Calu3 (cell line): ENCODE measurements at regions of chr2 and their contacts with region 1.

Region 1: GRCh38 chr2:55771612-55772011 is 78.0 kb upstream of the PNPT1 start:
- DNase-seq: no peak
- H3K4me3 Mint-ChIP-seq: peak overlapping the region; percentile 29
- H3K27ac Mint-ChIP-seq: peak overlapping the region; percentile 54
- H3K4me1 Mint-ChIP-seq: peaks cover 33% of the 10 kb centered on the region
- H3K27me3 Mint-ChIP-seq: no peaks in the 10 kb centered on the region
- CTCF ChIP-seq: peak; percentile 50

Region 2: GRCh38 chr2:55843096-55843993 is 71.7 kb after region 1 on chr2:
- CTCF ChIA-PET with region 1: no interaction called
- intact Hi-C with region 1: loop called (anchors 2 kb)
- DNase-seq: peak; percentile 38
- H3K4me3 Mint-ChIP-seq: no peak overlapping the region
- H3K27ac Mint-ChIP-seq: no peak overlapping the region
- H3K4me1 Mint-ChIP-seq: peaks cover 5% of the 10 kb centered on the region
- H3K27me3 Mint-ChIP-seq: no peaks in the 10 kb centered on the region
- CTCF ChIP-seq: no peak

Region 3: DNA sequence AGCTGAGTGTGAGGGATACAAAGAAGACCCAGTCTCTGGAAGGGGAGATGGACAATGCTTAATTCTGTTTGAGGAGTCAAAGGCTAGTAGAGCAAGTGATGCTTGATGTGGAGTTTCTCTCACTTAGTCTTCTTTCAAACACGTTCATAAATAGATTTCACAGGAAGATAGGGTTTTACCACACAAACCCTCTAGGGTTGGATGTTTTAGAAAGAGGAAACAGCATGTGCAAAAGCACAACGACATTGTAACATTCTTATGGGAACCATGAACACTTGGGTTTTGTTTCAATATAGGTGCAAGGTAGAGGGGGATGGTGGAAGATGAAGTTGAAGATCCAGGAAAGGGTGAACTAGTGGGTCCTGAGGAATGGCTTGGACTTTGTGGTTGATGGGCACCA is 162.7 kb after region 1 on chr2:
- CTCF ChIA-PET with region 1: no interaction called
- intact Hi-C with region 1: no loop called
- DNase-seq: no peak
- H3K4me3 Mint-ChIP-seq: no peak overlapping the region
- H3K27ac Mint-ChIP-seq: no peak overlapping the region
- H3K4me1 Mint-ChIP-seq: no peaks in the 10 kb centered on the region
- H3K27me3 Mint-ChIP-seq: no peaks in the 10 kb centered on the region
- CTCF ChIP-seq: no peak

Region 4: GRCh38 chr2:55961318-55961911 is 189.8 kb after region 1 on chr2:
- CTCF ChIA-PET with region 1: interaction called, 36 read pairs
- intact Hi-C with region 1: loop called (anchors 1 kb)
- DNase-seq: peak; percentile 23
- H3K4me3 Mint-ChIP-seq: no peak overlapping the region
- H3K27ac Mint-ChIP-seq: peak overlapping the region; percentile 46
- H3K4me1 Mint-ChIP-seq: peaks cover 40% of the 10 kb centered on the region
- H3K27me3 Mint-ChIP-seq: no peaks in the 10 kb centered on the region
- CTCF ChIP-seq: peak; percentile 21

Region 5: DNA sequence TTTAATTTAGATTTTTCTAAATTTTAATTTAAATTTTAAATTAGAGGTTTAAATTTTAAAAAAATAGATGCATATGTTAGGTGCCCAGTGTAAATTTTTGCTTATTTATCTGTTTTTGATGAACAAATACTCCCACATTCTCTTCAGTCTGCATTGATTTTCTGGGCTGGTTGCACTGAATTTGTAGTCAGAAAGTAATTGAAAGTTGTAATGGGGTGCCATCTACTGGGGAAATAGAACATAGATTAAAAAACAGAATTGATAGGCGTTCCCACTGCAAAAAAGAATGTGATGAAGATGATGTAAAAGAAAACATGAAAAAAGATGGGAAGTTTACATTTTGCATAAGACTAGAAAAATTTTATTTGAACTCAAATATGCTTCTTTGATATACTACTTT is 360.5 kb after region 1 on chr2:
- CTCF ChIA-PET with region 1: interaction called, 4 read pairs
- intact Hi-C with region 1: loop called (anchors 5 kb)
- DNase-seq: no peak
- H3K4me3 Mint-ChIP-seq: no peak overlapping the region
- H3K27ac Mint-ChIP-seq: no peak overlapping the region
- H3K4me1 Mint-ChIP-seq: peaks cover 8% of the 10 kb centered on the region
- H3K27me3 Mint-ChIP-seq: no peaks in the 10 kb centered on the region
- CTCF ChIP-seq: no peak